CD14-positive monocyte (primary cell): ENCODE measurements at regions of chr3 and their contacts with region 1.

Region 1: GRCh38 chr3:115147329-115148141 is 447 bp upstream of the ZBTB20 start:
- DNase-seq: peak; percentile 99 to 100 (median 100)
- H3K4me3 ChIP-seq: peak overlapping the region; percentile 86 to 99 (median 95)
- H3K4me3 Mint-ChIP-seq: peak overlapping the region; percentile 84 to 95
- H3K27ac ChIP-seq: peak overlapping the region; percentile 89 to 93
- H3K27ac Mint-ChIP-seq: peak overlapping the region; percentile 92 to 99 (median 98)
- H3K4me1 ChIP-seq: peaks cover 10 to 22% of the 10 kb centered on the region in 2 donors
- H3K4me1 Mint-ChIP-seq: peaks cover 11% of the 10 kb centered on the region
- H3K27me3 ChIP-seq: no peaks in the 10 kb centered on the region
- H3K27me3 Mint-ChIP-seq: peaks cover 0 to 1% (median 0%) of the 10 kb centered on the region in 3 donors
- CTCF ChIP-seq: no peak

Region 2: GRCh38 chr3:114056130-114057010 is 1091.2 kb before region 1 on chr3 and contains the starts of genes CCDC191 and QTRT2:
- intact Hi-C with region 1: loop called in 1 of 2 experiments (anchors 10 kb)
- DNase-seq: peak; percentile 99 to 100 (median 99)
- H3K4me3 ChIP-seq: peak within 1 kb of the TSS; percentile 89 to 96 (median 93)
- H3K4me3 Mint-ChIP-seq: peak within 1 kb of the TSS; percentile 91 to 99
- H3K27ac ChIP-seq: peak within 1 kb of the TSS; percentile 70 to 97
- H3K27ac Mint-ChIP-seq: peak within 1 kb of the TSS; percentile 97 to 99 (median 98)
- H3K4me1 ChIP-seq: peaks cover 35 to 43% of the 10 kb centered on the region in 2 donors
- H3K4me1 Mint-ChIP-seq: peaks cover 43% of the 10 kb centered on the region
- H3K27me3 ChIP-seq: no peaks in the 10 kb centered on the region
- H3K27me3 Mint-ChIP-seq: peaks cover 0 to 2% (median 0%) of the 10 kb centered on the region in 3 donors
- CTCF ChIP-seq: no peak
- polyA plus RNA-seq, gene CCDC191: 0.48 to 2.9 (median 1.2) TPM
- polyA plus RNA-seq, gene QTRT2: 14.5 to 16.7 (median 15.9) TPM